Activated naive CD4-positive, alpha-beta T cell treated with anti-CD3 and anti-CD28 coated beads for 36 hours (primary cell): ENCODE measurements at regions of chr20 and their contacts with region 1.

Region 1: DNA sequence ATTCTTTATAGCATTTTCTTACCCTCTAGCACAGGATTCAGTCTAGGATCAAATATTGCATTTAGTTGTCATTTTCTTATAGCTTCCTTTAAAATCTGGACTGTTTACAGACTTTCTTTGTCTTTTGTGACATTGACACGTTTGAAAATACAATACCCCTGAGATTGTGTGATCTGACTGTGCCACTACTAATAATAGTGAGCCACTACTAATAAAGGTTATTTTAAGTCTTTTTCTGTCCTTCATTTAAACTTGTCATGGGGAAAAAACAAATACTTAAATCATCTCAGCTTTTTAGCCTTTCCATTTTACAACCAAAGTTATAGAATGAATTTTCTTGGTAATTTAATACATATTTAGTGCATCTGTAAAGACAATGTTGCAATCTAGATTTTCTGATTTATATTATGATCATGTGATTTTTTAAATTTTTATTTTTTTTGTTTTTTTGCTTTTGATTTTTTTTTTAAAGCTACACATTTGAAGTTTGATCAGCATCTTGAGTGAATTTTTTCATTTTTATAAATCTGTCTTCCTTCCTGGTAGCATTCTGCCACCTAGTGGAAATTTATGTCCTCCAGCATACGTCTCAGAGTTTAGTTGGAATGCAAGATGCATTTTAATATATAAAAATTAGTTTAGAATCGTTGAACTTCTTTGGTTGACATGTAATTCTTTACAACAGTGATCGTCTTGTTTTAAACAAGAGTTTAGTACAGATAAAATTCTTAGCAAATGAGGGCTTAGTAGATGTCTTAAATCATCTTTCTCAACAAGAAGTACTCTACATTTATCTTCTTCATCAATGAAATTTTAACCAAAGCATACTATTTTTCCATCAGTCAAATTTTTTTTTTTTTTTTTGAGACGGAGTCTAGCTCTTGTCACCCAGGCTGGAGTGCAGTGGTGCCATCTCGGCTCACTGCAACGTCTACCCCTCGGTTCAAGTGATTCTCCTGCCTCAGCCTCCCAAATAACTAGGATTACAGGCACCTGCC is 119.4 kb downstream of the NCOA3 start:
- DNase-seq: peak; percentile 22
- H3K4me3 Mint-ChIP-seq: no peak overlapping the region
- H3K27ac Mint-ChIP-seq: peak overlapping the region; percentile 13
- H3K4me1 Mint-ChIP-seq: peaks cover 33% of the 10 kb centered on the region
- H3K27me3 Mint-ChIP-seq: no peaks in the 10 kb centered on the region

Region 2: GRCh38 chr20:47196091-47197081 is 424.7 kb before region 1 on chr20:
- CTCF ChIA-PET with region 1: interaction called, 3 read pairs
- intact Hi-C with region 1: loop called (anchors 1 kb)
- DNase-seq: peak; percentile 87
- H3K4me3 Mint-ChIP-seq: no peak overlapping the region
- H3K27ac Mint-ChIP-seq: no peak overlapping the region
- H3K4me1 Mint-ChIP-seq: peaks cover 13% of the 10 kb centered on the region
- H3K27me3 Mint-ChIP-seq: peaks cover 3% of the 10 kb centered on the region

Region 3: GRCh38 chr20:47411161-47411560 is 209.9 kb before region 1 on chr20:
- CTCF ChIA-PET with region 1: no interaction called
- intact Hi-C with region 1: loop called (anchors 5 kb)
- DNase-seq: no peak
- H3K4me3 Mint-ChIP-seq: no peak overlapping the region
- H3K27ac Mint-ChIP-seq: no peak overlapping the region
- H3K4me1 Mint-ChIP-seq: peaks cover 29% of the 10 kb centered on the region
- H3K27me3 Mint-ChIP-seq: no peaks in the 10 kb centered on the region

Region 4: DNA sequence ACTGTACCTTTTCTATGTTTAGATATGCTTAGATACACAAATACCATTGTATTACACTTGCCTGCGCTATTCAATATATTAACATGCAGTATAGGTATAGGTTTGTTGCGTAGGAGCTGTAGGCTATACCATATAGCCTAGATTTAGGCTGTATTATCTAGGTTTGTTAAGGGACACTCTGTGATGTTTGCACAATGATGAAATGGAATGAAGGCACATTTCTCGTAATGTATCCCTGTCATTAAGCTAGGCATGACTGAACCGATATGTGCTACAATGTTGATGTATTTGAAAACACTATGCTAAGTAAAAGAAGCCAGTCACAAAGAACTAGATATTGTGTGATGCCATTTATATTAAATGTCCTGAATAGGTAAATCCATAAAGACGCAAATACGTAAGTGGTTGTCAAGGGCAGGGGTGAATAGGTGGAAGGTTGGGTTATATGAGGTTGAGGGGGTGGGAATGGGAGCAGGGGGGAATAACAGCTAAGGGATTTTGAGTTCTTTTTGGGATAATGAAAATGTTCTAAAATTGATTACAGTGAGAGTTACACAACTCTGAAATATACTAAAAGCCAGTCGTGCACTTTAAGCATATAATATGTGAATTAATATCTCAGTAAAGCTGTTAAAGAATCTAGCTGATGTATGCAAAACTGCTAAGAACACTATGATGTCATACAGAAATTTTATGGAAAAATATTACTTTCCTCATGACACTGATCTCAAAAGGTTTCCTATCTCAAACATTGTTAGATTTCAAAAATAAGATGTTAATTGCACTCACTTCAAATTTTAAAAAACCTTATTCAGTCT is 22.0 kb before region 1 on chr20:
- CTCF ChIA-PET with region 1: no interaction called
- intact Hi-C with region 1: no loop called
- DNase-seq: no peak
- H3K4me3 Mint-ChIP-seq: no peak overlapping the region
- H3K27ac Mint-ChIP-seq: no peak overlapping the region
- H3K4me1 Mint-ChIP-seq: peaks cover 48% of the 10 kb centered on the region
- H3K27me3 Mint-ChIP-seq: no peaks in the 10 kb centered on the region